ENCODE measurements at regions of chr3 and their contacts with region 1.

Region 1: GRCh38 chr3:151168269-151169094 is 34.5 kb downstream of the GPR171 start:
- DNase-seq: peak; percentile 65
- CTCF ChIP-seq: peak; percentile 75

Region 2: GRCh38 chr3:150385296-150386242 is 782.9 kb before region 1 on chr3:
- in situ Hi-C with region 1: no loop called
- DNase-seq: peak; percentile 40
- CTCF ChIP-seq: no peak

Region 3: GRCh38 chr3:151227807-151228665 is 59.6 kb after region 1 on chr3:
- in situ Hi-C with region 1: loop called (anchors 10 kb)
- DNase-seq: peak; percentile 71
- CTCF ChIP-seq: peak; percentile 77

Region 4: DNA sequence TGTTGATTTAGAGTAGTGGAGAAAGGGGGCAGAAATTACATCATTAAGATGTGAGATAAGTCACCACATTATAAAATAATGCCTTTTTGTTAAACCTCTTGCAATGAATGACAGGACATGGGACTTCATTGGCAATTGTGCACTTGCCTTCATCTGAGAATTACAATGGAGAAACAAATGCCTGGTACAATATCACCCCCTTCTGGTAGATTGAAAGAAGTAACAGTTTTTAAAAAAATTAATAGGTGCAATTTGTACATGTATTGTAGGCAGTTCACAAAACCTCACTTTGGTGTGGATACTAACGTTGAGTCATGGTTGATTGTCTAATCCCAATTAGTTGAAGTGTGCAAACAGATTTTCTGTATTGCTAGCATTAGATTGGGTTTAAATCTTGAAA is 114.4 kb after region 1 on chr3:
- in situ Hi-C with region 1: loop called (anchors 5 kb)
- DNase-seq: peak; percentile 60
- CTCF ChIP-seq: peak; percentile 31

Region 5: GRCh38 chr3:151327571-151328198 is 159.2 kb after region 1 on chr3:
- in situ Hi-C with region 1: no loop called
- DNase-seq: peak; percentile 17
- CTCF ChIP-seq: peak; percentile 26

Region 6: DNA sequence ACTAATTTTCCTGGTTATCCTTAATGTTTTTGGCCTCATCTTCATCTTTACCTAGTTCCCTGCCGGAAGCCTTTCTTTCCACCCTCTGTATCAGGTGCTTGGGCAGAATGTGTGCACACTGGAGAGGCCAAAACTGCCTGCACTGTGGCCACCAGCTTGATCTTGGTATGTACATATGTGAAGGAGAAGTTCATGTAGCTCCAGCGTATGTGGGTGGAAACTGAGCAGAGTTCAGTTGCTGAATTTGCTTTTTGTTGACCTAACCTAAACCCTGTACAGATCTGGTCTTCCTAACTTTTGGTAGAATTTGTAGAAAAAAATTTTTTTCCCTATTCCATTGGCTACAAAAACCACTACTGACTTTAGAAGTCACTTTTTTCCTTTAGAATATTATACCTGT is 358.3 kb after region 1 on chr3:
- in situ Hi-C with region 1: no loop called
- DNase-seq: no peak
- CTCF ChIP-seq: no peak